Mammary epithelial cell (primary cell): ENCODE measurements at regions of chr17 and their contacts with region 1.

Region 1: DNA sequence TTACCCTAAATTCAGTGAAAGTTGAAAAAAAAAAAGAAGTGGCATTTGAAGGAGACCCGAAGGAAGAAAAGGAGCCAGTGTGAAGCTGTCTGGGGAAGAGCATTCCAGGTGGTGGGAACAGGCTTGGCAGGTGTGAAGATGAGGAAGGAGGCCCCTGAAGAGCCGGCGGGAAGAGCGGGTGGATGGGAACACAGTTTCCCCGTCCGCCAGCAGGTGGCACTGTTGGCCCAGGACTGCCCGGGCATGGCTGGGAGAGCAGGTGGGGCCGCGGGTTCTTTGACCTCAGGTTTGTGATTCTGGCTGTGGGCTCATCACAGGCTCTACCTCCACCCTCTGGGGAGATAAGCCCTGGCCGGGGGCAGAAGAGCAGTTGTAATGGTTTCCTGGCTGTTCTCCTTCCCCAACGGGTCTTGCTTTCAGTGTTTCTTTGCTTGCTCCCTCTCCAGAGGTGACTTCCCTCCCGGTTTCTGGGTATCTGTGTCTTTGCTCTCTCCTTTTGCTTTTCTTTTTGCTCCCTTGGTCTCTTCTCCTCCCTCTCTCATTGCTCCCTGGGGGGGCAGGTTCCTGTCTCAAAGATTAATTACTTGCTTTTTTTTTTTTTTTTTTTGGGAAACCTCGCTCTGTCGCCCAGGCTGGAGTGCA is 32.3 kb downstream of the RAP1GAP2 start:
- DNase-seq: peak; percentile 40
- H3K4me3 ChIP-seq: no peak overlapping the region
- H3K27ac ChIP-seq: no peak overlapping the region
- H3K4me1 ChIP-seq: no peaks in the 10 kb centered on the region
- H3K27me3 ChIP-seq: no peaks in the 10 kb centered on the region
- CTCF ChIP-seq: peak; percentile 80 to 98

Region 2: DNA sequence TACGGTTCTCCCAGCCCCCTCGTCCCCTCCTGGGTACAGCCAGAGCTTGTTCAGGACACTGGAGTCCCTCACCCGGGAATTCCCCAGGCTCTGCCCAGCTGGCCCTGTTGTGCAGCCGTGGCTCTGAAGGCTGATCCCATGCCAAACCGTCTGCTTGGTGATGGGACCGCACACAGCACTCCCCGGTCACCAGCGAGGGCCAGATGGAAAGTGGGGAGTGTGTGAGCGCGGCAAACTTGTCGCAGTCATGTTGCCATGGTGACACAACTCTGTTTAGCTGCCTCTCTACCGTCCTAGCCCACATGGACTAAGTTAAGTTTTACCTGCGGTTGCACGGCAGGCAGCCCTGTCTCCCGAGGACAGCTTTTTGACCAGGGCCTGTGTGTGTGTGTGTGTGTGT is 75.6 kb after region 1 on chr17:
- CTCF ChIA-PET with region 1: interaction called, 20 read pairs
- dilution Hi-C with region 1: no loop called
- in situ Hi-C with region 1: no loop called
- intact Hi-C with region 1: no loop called
- DNase-seq: no peak
- H3K4me3 ChIP-seq: no peak overlapping the region
- H3K27ac ChIP-seq: no peak overlapping the region
- H3K4me1 ChIP-seq: no peaks in the 10 kb centered on the region
- H3K27me3 ChIP-seq: no peaks in the 10 kb centered on the region
- CTCF ChIP-seq: no peak

Region 3: DNA sequence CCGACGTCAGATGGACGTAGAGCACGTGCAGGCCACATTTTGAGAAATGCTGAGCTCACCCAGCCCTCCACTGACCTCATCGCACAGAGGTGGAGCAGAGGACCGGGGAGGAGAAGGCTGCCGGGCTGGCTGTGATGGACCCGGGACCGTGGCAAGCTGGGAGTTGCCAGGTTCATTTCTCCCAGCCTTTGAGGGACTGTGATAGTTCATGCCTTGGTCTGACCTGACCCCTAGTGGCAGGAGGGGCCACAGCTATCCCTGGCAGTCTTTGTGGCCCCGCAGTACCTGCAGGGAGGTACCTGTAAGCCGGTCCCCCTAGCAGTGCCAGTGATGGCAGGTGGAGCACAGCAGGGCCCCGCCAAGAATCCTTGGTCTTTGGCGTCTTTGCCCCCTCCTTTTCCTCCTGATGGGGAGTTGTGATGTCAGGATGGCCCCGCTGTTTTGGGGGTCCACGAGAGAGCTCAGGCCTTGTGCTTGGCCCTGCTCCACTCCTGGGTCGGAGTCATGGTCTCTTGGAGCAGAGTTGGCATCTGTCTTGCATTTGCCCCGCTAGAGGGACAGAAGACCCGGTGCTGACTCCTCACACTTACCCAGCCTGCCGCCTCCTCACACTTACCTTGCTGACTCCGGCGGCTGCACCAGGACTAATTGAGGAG is 184.5 kb after region 1 on chr17:
- CTCF ChIA-PET with region 1: no interaction called
- dilution Hi-C with region 1: no loop called
- in situ Hi-C with region 1: loop called in 1 of 2 experiments (anchors 25 kb)
- intact Hi-C with region 1: loop called (anchors 1 kb)
- DNase-seq: peak; percentile 26
- H3K4me3 ChIP-seq: no peak overlapping the region
- H3K27ac ChIP-seq: no peak overlapping the region
- H3K4me1 ChIP-seq: no peaks in the 10 kb centered on the region
- H3K27me3 ChIP-seq: no peaks in the 10 kb centered on the region
- CTCF ChIP-seq: peak; percentile 63 to 64

Region 4: DNA sequence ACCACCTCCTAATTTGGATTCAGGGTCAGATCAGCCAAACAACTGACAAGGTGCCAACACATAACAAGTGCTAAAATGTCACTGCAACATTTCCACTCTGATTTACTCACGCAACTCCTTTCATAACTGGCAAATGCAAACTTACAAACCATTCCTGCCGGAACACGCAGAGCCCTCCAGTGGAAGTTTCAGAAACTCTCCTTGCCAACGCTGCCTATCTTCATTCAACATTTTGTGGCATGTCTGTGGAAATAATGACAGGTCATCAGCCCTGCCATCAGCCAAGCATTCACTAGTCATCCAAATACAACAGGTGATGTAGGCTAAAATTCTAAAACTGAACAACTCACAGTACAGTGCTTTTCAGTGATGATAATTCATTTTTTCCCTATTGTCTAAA is 507.4 kb after region 1 on chr17:
- CTCF ChIA-PET with region 1: no interaction called
- dilution Hi-C with region 1: no loop called
- in situ Hi-C with region 1: no loop called
- intact Hi-C with region 1: loop called (anchors 5 kb)
- DNase-seq: peak; percentile 14
- H3K4me3 ChIP-seq: no peak overlapping the region
- H3K27ac ChIP-seq: no peak overlapping the region
- H3K4me1 ChIP-seq: no peaks in the 10 kb centered on the region
- H3K27me3 ChIP-seq: no peaks in the 10 kb centered on the region
- CTCF ChIP-seq: peak in 1 of 2 donors; percentile 38

Region 5: DNA sequence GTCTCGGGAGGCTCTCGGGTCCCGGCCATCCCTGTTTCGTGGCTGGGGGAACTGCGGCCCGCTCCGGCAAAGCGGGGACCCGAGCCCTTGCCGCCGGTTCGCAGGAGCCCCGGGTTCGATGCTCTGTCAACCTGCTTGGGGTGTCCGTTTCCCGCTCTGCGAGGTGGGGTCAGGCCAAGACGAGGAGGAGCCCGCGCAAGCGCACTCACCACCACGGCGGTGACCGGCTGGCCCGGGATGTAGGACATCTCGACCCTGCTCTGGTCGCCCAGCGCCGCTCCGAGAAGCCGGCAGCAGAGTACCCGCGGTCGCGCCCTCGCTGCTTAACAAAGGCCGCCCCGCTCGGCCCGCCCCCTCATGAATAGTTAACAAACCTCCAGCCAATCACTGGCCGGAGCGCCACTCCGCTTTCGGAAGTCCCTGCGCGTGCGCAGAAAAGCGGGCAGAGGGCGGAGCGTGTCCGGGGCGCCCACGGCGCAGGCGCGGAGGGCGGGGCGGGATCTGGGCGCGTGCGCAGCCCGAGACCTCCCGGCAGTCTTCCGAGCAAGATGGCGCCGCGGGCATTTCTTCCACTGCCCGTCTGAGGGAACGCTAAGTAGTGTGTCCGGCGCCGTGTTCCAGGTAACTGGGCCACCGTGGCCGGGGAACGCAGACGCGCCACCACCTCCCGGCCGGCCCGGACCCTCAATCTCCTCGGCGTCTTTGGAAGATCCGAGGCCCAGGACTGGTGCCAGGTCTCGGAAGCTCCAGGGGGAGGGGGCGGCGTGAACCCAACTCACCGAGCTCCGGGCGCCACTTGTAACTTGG is 840.0 kb after region 1 on chr17 and contains the starts of genes EMC6 and TAX1BP3:
- CTCF ChIA-PET with region 1: no interaction called
- dilution Hi-C with region 1: no loop called
- in situ Hi-C with region 1: loop called in 1 of 2 experiments (anchors 25 kb)
- intact Hi-C with region 1: no loop called
- DNase-seq: peak; percentile 97
- H3K4me3 ChIP-seq: peak within 1 kb of the TSS; percentile 91 to 96 (median 94)
- H3K27ac ChIP-seq: peak within 1 kb of the TSS; percentile 78
- H3K4me1 ChIP-seq: peaks cover 23% of the 10 kb centered on the region
- H3K27me3 ChIP-seq: no peaks in the 10 kb centered on the region
- CTCF ChIP-seq: no peak
- total RNA-seq, gene EMC6: 11.0 to 57.9 TPM
- total RNA-seq, gene TAX1BP3: 188 to 213 TPM